Activated CD8-positive, alpha-beta T cell treated with anti-CD3 and anti-CD28 coated beads for 36 hours (primary cell): ENCODE measurements at regions of chr17 and their contacts with region 1.

Region 1: DNA sequence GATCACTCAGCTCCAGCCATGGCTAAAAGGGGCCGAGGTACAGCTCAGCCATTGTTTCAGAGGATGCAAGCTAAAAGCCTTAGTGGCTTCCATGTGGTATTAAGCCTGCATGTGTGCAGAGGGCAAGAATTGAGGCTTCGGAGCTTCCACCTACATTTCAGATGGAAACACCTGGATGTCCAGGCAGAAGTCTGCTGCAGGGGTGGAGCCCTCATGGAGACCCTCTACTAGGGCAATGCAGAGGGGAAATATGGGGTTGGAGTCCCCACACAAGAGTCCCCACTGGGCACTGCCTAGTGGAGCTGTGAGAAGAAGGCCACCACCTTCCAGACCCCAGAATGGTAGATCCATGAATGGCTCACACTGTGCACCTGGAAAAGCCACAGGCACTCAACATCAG is 14.7 kb upstream of the PSMD11 start:
- DNase-seq: no peak
- ATAC-seq: no peak
- H3K4me3 Mint-ChIP-seq: no peak overlapping the region
- H3K27ac Mint-ChIP-seq: no peak overlapping the region
- H3K4me1 Mint-ChIP-seq: no peaks in the 10 kb centered on the region
- H3K27me3 Mint-ChIP-seq: no peaks in the 10 kb centered on the region
- CTCF ChIP-seq: no peak

Region 2: DNA sequence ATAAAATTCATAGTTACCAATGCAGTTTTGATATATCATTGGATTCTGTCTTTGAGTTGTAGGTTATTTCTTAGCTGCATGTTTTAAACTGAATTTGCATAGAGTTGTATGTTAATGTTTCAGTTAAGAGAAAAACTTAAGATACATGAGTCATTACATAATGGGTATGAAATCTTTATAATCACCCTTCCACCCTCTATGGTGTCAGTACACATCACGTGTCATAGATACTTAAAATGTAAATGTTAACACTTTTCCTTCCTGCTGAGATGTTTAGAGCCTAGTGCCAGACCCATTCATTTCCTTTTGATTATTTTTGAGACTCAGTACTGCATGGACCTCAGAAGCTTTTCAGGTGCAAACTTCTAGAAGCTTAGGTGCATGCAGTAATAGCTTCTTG is 59.2 kb before region 1 on chr17:
- CTCF ChIA-PET with region 1: no interaction called
- POLR2A ChIA-PET with region 1: no interaction called
- intact Hi-C with region 1: no loop called
- DNase-seq: no peak
- ATAC-seq: peak; percentile 39
- H3K4me3 Mint-ChIP-seq: no peak overlapping the region
- H3K27ac Mint-ChIP-seq: peak overlapping the region; percentile 14
- H3K4me1 Mint-ChIP-seq: peaks cover 42% of the 10 kb centered on the region
- H3K27me3 Mint-ChIP-seq: no peaks in the 10 kb centered on the region
- CTCF ChIP-seq: no peak

Region 3: GRCh38 chr17:32444308-32445073 is 14.9 kb after region 1 on chr17 and contains the start of gene PSMD11:
- CTCF ChIA-PET with region 1: interaction called, 28 read pairs
- POLR2A ChIA-PET with region 1: interaction called, 3 read pairs
- intact Hi-C with region 1: no loop called
- DNase-seq: peak; percentile 99
- ATAC-seq: peak; percentile 97
- H3K4me3 Mint-ChIP-seq: peak within 1 kb of the TSS; percentile 80
- H3K27ac Mint-ChIP-seq: peak within 1 kb of the TSS; percentile 76
- H3K4me1 Mint-ChIP-seq: peaks cover 37% of the 10 kb centered on the region
- H3K27me3 Mint-ChIP-seq: peaks cover 6% of the 10 kb centered on the region
- CTCF ChIP-seq: no peak
- total RNA-seq, gene PSMD11: 119 to 130 TPM

Region 4: GRCh38 chr17:32551186-32551955 is 121.8 kb after region 1 on chr17:
- CTCF ChIA-PET with region 1: no interaction called
- POLR2A ChIA-PET with region 1: no interaction called
- intact Hi-C with region 1: no loop called
- DNase-seq: peak; percentile 37
- ATAC-seq: peak; percentile 96
- H3K4me3 Mint-ChIP-seq: peak overlapping the region; percentile 1
- H3K27ac Mint-ChIP-seq: peak overlapping the region; percentile 81
- H3K4me1 Mint-ChIP-seq: peaks cover 41% of the 10 kb centered on the region
- H3K27me3 Mint-ChIP-seq: no peaks in the 10 kb centered on the region
- CTCF ChIP-seq: no peak

Region 5: GRCh38 chr17:32794533-32795246 is 365.1 kb after region 1 on chr17:
- CTCF ChIA-PET with region 1: no interaction called
- POLR2A ChIA-PET with region 1: no interaction called
- intact Hi-C with region 1: no loop called
- DNase-seq: no peak
- ATAC-seq: no peak
- H3K4me3 Mint-ChIP-seq: no peak overlapping the region
- H3K27ac Mint-ChIP-seq: no peak overlapping the region
- H3K4me1 Mint-ChIP-seq: no peaks in the 10 kb centered on the region
- H3K27me3 Mint-ChIP-seq: no peaks in the 10 kb centered on the region
- CTCF ChIP-seq: no peak